Activated CD4-positive, alpha-beta T cell treated with anti-CD3 and anti-CD28 coated beads for 36 hours (primary cell): ENCODE measurements at regions of chr6 and their contacts with region 1.

Region 1: DNA sequence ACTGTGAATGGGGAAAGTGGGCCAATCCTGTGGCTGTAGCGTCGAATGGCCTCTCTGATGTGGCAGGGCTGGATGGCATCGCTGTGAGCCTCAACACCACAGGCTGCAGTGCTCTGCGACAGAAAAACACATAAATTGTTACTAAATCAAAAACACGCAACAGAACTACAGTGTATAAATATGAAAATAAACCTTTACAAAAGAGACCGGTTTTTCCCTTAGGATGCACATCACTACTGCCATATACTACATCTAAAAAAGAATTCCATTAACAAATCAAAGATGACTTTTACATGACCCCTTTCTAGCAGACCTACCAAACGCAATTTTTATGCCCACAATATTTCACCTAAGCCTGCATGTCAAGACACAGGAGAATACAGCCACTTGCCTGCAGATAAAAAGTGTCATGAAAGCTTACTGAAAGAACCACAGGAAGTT is 395.5 kb upstream of the RUNX2 start:
- DNase-seq: peak; percentile 55
- ATAC-seq: peak; percentile 42
- H3K4me3 Mint-ChIP-seq: peak overlapping the region; percentile 67
- H3K27ac Mint-ChIP-seq: peak overlapping the region; percentile 81
- H3K4me1 Mint-ChIP-seq: peaks cover 52% of the 10 kb centered on the region
- H3K27me3 Mint-ChIP-seq: no peaks in the 10 kb centered on the region

Region 2: GRCh38 chr6:44960898-44961297 is 28.2 kb after region 1 on chr6:
- CTCF ChIA-PET with region 1: no interaction called
- POLR2A ChIA-PET with region 1: no interaction called
- intact Hi-C with region 1: loop called in 1 of 2 experiments (anchors 2 kb)
- DNase-seq: no peak
- ATAC-seq: peak; percentile 91
- H3K4me3 Mint-ChIP-seq: no peak overlapping the region
- H3K27ac Mint-ChIP-seq: no peak overlapping the region
- H3K4me1 Mint-ChIP-seq: peaks cover 18% of the 10 kb centered on the region
- H3K27me3 Mint-ChIP-seq: no peaks in the 10 kb centered on the region

Region 3: DNA sequence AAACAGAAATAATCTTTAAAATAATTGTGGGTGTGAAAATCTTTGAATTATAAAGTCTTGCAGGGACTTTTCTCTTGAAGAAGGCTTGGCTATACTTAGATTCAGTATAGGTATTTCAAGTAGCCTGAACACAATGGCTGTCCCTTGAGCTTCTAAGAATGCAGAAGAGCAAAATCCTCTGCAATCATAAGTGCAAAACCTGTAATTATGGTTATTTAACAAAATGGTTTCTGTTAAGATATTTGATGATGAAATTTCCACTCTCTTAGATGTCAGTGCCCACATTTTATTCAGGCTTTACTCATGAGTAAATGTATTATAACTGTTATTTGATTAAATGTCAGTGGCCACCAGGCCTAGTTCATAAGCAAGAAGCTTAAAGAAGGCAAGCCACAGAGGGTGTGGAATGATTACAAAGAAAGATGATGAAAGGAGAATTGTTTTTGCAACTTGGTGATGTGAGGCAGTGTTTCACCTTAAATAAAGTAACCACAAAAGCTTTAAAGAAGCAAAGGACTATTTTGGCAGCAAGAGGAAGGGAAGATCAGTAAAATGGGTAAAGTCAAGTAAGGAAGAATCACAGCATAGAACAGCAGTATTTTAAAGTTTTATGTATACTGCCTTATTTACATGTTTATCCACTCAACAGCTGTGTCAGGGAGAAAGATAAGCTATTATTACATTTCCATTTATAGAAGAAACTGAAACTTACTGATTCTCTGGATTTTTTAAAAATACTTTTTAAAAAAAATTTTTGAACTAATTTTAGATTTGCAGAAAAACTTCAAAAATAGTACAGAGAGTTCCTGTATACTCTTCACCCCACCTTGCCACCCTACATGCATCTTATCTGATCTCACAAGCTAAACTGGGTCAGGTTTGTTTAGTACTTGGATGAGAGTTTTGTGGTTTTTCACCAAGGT is 44.3 kb after region 1 on chr6:
- CTCF ChIA-PET with region 1: no interaction called
- POLR2A ChIA-PET with region 1: no interaction called
- intact Hi-C with region 1: loop called in 1 of 2 experiments (anchors 2 kb)
- DNase-seq: no peak
- ATAC-seq: peak; percentile 81
- H3K4me3 Mint-ChIP-seq: peak overlapping the region; percentile 2
- H3K27ac Mint-ChIP-seq: peak overlapping the region; percentile 68
- H3K4me1 Mint-ChIP-seq: peaks cover 46% of the 10 kb centered on the region
- H3K27me3 Mint-ChIP-seq: no peaks in the 10 kb centered on the region

Region 4: GRCh38 chr6:45009576-45009975 is 76.9 kb after region 1 on chr6:
- CTCF ChIA-PET with region 1: no interaction called
- POLR2A ChIA-PET with region 1: no interaction called
- intact Hi-C with region 1: loop called (anchors 1 kb)
- DNase-seq: no peak
- ATAC-seq: peak; percentile 98
- H3K4me3 Mint-ChIP-seq: no peak overlapping the region
- H3K27ac Mint-ChIP-seq: peak overlapping the region; percentile 10
- H3K4me1 Mint-ChIP-seq: peaks cover 16% of the 10 kb centered on the region
- H3K27me3 Mint-ChIP-seq: no peaks in the 10 kb centered on the region

Region 5: DNA sequence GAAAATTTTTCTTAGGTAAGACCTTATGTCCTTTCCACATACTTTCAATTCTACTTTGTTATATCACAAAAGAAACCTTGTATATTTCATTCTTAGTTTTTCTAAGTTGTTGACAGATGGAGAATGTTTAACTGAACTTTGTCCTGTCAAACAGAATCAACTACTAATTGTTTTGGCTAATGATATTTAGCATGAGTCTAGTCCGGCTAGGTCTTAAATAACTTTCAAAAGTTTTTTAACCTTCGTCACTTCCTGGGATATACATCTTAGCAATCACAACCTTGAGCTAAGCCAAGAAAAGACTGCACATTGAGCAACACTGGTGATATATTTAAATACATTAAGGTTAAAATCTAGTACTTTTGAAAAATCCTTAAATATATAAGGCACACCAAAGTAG is 332.6 kb after region 1 on chr6:
- CTCF ChIA-PET with region 1: no interaction called
- POLR2A ChIA-PET with region 1: no interaction called
- intact Hi-C with region 1: no loop called
- DNase-seq: no peak
- ATAC-seq: no peak
- H3K4me3 Mint-ChIP-seq: no peak overlapping the region
- H3K27ac Mint-ChIP-seq: no peak overlapping the region
- H3K4me1 Mint-ChIP-seq: no peaks in the 10 kb centered on the region
- H3K27me3 Mint-ChIP-seq: no peaks in the 10 kb centered on the region

Region 6: GRCh38 chr6:46011241-46012085 is 1078.8 kb after region 1 on chr6:
- CTCF ChIA-PET with region 1: no interaction called
- POLR2A ChIA-PET with region 1: no interaction called
- intact Hi-C with region 1: loop called in 1 of 2 experiments (anchors 10 kb)
- DNase-seq: peak; percentile 74
- ATAC-seq: peak; percentile 86
- H3K4me3 Mint-ChIP-seq: peak overlapping the region; percentile 39
- H3K27ac Mint-ChIP-seq: peak overlapping the region; percentile 58
- H3K4me1 Mint-ChIP-seq: peaks cover 51% of the 10 kb centered on the region
- H3K27me3 Mint-ChIP-seq: peaks cover 1% of the 10 kb centered on the region